Right ventricle myocardium inferior (tissue), 1 donor: ENCODE measurements at regions of chr13 and their contacts with region 1.

Region 1: DNA sequence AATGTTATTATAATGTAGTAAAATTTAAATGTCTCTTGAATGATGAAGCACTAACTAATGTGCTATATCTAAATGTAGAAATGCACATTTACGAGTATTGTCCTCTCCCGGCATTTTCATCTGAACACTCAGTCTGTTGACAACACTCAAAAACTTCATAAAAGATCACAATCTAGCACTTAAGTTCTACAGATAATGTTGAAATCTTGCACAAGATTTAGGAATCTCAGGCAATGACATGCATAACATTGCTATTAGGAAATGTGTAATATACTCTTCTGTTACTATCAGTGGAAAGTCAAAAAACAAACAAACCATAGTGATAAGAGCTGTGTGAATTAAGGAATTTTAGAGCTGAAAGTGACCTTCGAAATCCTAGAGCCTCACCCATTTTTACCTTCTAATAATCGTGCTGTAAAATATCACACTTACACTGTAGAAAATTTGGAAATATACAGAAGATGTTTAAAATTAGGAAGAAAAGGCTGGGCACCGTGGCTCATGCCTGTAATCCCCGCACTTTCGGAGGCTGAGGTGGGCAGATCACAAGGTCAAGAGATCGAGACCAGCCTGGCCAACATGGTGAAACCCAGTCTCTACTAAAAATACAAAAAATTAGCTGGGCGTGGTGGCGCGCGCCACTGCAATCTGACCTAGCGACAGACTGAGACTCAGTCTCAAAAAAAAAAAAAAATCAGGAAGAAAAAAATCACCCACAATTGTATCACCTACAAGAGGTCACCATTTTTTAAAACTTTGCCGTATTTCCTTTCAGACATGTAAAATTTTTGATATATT is 37.7 kb upstream of the XPO4 start:
- DNase-seq: no peak
- ATAC-seq: no peak

Region 2: GRCh38 chr13:21060987-21061763 is 120.9 kb after region 1 on chr13 and contains the start of gene LATS2:
- intact Hi-C with region 1: loop called (anchors 5 kb)
- DNase-seq: peak; percentile 99
- ATAC-seq: peak; percentile 96
- total RNA-seq, gene LATS2: 23.7 TPM

Region 3: DNA sequence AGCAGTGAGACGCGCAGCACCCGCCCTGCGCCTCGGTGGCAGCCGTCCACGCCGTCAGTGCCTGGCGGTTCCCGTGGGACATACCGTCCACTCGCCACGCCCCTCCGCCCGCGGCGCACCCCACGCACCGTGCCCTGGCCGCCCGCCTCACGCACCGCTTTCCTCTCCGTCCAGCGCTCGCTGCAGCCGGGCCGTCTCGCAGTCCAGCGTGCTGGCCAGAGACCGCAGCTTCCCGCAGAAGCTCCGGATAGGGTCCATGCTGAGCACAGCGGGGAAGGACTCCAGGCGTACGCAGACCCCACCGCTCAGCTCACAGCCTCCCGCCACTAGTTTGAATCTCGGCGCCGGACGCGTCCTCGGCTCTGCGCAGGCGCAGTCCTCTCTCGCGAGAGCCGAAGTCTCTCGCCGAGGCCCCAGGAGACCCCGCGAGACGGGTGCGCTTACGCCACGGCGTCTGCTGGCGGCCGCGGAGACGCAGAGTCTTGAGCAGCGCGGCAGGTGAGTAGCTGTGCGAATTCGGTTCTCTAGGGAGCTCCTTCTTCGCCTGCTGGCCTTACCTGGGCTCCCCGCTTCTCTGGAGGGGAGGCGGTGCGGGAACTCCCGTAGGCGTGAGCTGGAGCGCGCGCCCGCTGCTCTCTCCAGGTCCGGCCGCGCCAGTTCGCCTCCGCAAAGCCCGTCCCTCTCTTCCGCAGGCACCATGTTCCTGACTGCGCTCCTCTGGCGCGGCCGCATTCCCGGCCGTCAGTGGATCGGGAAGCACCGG is 236.1 kb after region 1 on chr13 and contains the starts of genes MRPL57 and SKA3:
- intact Hi-C with region 1: loop called (anchors 5 kb)
- DNase-seq: peak; percentile 95
- ATAC-seq: peak; percentile 97
- total RNA-seq, gene MRPL57: 22.3 TPM
- total RNA-seq, gene SKA3: 0.38 TPM

Region 4: DNA sequence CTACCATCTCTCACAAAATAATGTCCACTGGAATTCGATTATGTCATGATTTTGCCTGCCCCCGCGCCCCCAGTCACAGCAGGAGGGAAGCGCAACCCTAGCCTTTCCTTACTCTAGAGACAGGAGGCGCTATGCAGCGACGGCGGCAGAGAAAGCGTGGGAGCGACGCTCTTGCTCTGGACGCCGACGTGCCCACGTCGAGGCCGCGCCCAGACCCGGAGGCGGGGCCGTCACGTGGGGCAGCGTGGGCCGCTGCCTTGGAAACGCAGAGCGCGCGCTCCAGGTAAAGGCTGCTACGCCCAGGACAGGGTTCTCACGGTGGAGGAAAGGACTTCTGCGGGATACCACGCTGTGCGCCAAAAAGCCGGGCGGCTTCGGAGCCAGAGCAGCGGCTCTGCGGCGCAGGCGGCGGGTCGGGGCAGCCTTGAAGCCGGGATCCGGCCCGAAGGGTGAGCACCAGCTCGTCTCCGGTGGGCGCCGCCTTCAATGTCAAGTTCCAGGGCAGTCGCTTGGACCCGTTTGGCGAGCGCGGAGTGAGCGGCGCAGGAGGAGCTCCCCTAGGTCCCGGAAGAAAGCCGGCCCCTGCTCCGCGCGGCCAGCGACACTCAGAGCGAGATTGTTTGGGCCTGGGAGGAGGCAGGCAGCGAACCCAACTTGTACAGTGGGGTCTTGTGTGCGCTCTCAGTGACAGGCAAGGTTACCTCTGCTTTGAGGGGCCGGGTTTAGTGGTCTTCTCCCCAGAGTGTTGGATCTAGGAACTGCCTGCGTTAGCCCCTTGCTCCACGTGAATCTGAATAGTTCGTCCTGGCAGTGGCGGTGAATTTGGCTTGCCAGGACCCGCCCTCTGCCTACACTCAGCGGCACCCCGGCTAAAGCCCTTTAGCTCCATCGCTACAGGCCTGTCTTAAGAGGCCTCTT is 357.9 kb after region 1 on chr13:
- intact Hi-C with region 1: loop called (anchors 5 kb)
- DNase-seq: peak; percentile 93
- ATAC-seq: peak; percentile 100

Region 5: GRCh38 chr13:21476893-21477472 is 536.7 kb after region 1 on chr13:
- intact Hi-C with region 1: loop called (anchors 5 kb)
- DNase-seq: peak; percentile 78
- ATAC-seq: peak; percentile 86